WTC11 (cell line): ENCODE measurements at regions of chr5 and their contacts with region 1.

Region 1: GRCh38 chr5:151651997-151652645 is 34.6 kb downstream of the SPARC start:
- DNase-seq: peak; percentile 88
- ATAC-seq: peak; percentile 99
- H3K4me3 Mint-ChIP-seq: no peak overlapping the region
- H3K27ac Mint-ChIP-seq: no peak overlapping the region
- H3K4me1 Mint-ChIP-seq: peaks cover 4% of the 10 kb centered on the region
- H3K27me3 Mint-ChIP-seq: no peaks in the 10 kb centered on the region
- CTCF ChIP-seq: peak; percentile 71

Region 2: DNA sequence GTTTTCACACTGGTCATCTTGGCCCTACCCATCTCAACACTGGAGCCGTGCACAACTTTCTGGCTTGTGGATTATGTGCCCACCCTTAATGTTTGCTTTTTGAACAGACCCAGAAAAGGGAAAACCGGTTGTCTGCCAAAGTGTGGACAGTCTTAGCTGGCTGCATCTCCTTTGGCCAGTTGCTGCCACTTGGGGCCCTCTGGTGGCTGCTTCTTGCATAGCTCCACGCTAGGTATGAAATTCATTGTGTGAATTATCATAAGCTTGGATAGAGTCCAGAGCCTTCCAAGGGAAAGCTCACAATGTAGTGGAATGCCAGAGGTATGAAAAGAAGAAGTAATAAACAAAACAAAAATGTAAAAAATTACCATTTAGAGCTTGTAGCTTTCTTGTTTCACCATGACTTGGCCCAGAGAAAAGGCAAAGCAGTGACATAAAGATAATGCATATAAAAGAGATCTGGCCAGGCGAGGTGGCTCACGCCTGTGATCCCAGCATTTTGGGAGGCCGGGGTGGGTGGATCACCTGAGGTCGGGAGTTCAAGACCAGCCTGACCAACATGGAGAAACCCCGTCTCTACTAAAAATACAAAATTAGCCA is 336.0 kb before region 1 on chr5:
- CTCF ChIA-PET with region 1: interaction called, 12 read pairs
- POLR2A ChIA-PET with region 1: no interaction called
- DNase-seq: peak; percentile 78
- ATAC-seq: peak; percentile 76
- H3K4me3 Mint-ChIP-seq: no peak overlapping the region
- H3K27ac Mint-ChIP-seq: no peak overlapping the region
- H3K4me1 Mint-ChIP-seq: peaks cover 18% of the 10 kb centered on the region
- H3K27me3 Mint-ChIP-seq: no peaks in the 10 kb centered on the region
- CTCF ChIP-seq: peak; percentile 78

Region 3: DNA sequence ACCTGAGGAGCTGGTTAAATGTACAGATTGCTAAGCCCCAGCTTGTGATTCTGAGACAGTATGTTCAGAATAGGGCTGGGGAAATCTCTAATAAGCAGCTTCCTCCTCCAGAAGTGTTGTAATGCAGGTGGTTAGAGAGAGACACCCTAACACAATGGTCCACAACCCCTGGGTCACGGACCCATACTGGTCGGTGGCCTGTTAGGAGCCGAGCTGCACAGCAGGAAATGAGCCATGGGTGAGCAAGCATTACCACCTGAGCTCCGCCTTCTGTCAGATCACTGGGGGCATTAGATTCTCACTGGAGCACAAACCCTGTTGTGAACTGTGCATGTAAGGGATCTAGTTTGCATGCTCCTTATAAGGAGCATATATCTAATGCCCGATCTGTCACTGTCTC is 142.9 kb before region 1 on chr5:
- CTCF ChIA-PET with region 1: interaction called, 12 read pairs
- POLR2A ChIA-PET with region 1: no interaction called
- DNase-seq: no peak
- ATAC-seq: no peak
- H3K4me3 Mint-ChIP-seq: no peak overlapping the region
- H3K27ac Mint-ChIP-seq: no peak overlapping the region
- H3K4me1 Mint-ChIP-seq: no peaks in the 10 kb centered on the region
- H3K27me3 Mint-ChIP-seq: no peaks in the 10 kb centered on the region
- CTCF ChIP-seq: no peak

Region 4: GRCh38 chr5:151569132-151570046 is 82.7 kb before region 1 on chr5:
- CTCF ChIA-PET with region 1: interaction called, 20 read pairs
- POLR2A ChIA-PET with region 1: no interaction called
- DNase-seq: no peak
- ATAC-seq: no peak
- H3K4me3 Mint-ChIP-seq: no peak overlapping the region
- H3K27ac Mint-ChIP-seq: no peak overlapping the region
- H3K4me1 Mint-ChIP-seq: peaks cover 13% of the 10 kb centered on the region
- H3K27me3 Mint-ChIP-seq: peaks cover 48% of the 10 kb centered on the region
- CTCF ChIP-seq: no peak

Region 5: DNA sequence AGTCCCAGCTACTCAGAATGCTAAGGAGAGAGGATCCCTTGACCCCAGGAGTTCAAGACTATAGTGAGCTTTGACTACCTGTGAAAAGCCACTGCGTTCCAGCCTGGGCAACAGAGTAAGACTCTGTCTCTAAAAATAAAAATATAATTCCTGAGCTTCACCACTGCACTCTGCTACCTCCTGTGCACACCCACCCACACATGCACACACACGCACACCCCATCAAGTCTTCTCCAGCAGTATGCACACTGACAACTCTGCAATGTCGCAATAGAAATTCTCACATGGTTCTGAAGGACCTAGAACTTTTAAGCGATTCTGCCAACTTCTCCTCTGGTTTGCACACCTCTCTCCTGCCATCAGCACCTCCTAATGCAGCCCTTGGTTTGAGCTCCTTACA is 13.5 kb before region 1 on chr5:
- CTCF ChIA-PET with region 1: interaction called, 22 read pairs
- POLR2A ChIA-PET with region 1: no interaction called
- DNase-seq: no peak
- ATAC-seq: no peak
- H3K4me3 Mint-ChIP-seq: no peak overlapping the region
- H3K27ac Mint-ChIP-seq: no peak overlapping the region
- H3K4me1 Mint-ChIP-seq: 0 out of 2 replicates have a peak, but pooled peaks cover 2% of the 10 kb centered on the region
- H3K27me3 Mint-ChIP-seq: peaks cover 34% of the 10 kb centered on the region
- CTCF ChIP-seq: no peak

Region 6: DNA sequence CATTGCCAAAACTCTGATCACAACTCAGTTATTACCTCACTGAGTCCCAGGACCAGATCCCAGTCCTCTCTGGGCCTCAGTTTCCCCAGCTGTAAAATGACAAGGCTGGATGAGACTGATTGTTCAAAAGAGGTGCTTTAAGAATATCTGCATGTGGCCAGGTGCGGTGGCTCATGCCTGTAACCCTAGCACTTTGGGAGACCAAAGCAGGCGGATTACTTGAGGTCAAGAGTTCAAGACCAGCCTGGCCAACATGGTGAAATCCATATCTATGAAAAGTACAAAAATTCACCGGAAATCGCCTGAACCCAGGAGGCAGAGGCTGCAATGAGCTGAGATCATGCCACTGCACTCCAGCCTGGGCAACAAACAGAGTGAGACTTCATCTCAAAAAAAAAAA is 98.0 kb after region 1 on chr5:
- CTCF ChIA-PET with region 1: interaction called, 10 read pairs
- POLR2A ChIA-PET with region 1: interaction called, 5 read pairs
- DNase-seq: no peak
- ATAC-seq: no peak
- H3K4me3 Mint-ChIP-seq: no peak overlapping the region
- H3K27ac Mint-ChIP-seq: no peak overlapping the region
- H3K4me1 Mint-ChIP-seq: peaks cover 3% of the 10 kb centered on the region
- H3K27me3 Mint-ChIP-seq: no peaks in the 10 kb centered on the region
- CTCF ChIP-seq: no peak

Region 7: GRCh38 chr5:151825445-151825844 is 173.3 kb after region 1 on chr5:
- CTCF ChIA-PET with region 1: no interaction called
- POLR2A ChIA-PET with region 1: no interaction called
- DNase-seq: peak; percentile 64
- ATAC-seq: peak; percentile 79
- H3K4me3 Mint-ChIP-seq: no peak overlapping the region
- H3K27ac Mint-ChIP-seq: no peak overlapping the region; the same call in 1 of the 2 replicates
- H3K4me1 Mint-ChIP-seq: peaks cover 7% of the 10 kb centered on the region
- H3K27me3 Mint-ChIP-seq: no peaks in the 10 kb centered on the region; the same call in 1 of the 2 replicates
- CTCF ChIP-seq: peak; percentile 79